ENCODE measurements at regions of chr12 and their contacts with region 1.

Region 1: DNA sequence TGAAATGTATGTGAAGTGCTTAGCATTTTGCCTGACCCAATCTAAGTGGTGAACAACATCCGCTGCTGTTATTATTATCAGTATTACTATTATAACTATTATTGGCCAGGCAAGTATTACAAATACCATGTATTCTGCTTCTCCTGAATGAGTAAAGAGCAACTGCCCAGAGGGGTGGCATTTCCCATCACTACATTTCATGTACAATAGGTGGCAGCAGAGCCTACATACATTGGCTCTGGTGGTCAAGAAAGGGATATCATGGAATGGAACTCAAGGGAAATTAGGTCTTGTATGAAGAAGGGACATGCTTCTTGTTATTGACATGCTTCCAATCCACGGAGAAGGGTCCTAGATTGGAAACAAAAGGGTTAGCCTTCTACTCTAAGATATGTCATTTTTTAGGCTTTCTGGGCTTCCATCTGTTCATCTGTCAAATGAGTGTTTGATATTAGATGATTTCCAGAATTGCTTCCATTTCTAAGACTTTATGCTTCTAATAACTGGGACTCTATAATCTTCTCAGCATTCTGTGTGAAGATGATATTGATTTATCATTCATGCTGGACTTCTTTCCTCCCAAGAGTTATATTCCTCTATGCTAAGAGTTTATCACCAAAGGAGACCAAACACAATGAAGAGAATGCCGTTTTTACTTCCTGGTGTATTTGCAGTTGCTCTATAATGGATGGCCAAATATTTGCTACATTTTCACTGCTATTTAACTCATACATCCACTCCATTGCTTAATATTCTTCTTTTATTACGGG is 239.1 kb downstream of the SSPN start:
- DNase-seq: peak; percentile 70
- H3K4me3 ChIP-seq: no peak overlapping the region
- H3K27ac ChIP-seq: no peak overlapping the region
- H3K4me1 ChIP-seq: no peaks in the 10 kb centered on the region
- CTCF ChIP-seq: peak; percentile 92

Region 2: GRCh38 chr12:26126340-26127284 is 307.9 kb before region 1 on chr12:
- CTCF ChIA-PET with region 1: no interaction called
- POLR2A ChIA-PET with region 1: no interaction called
- intact Hi-C with region 1: loop called (anchors 10 kb)
- DNase-seq: no peak
- H3K4me3 ChIP-seq: no peak overlapping the region
- H3K27ac ChIP-seq: no peak overlapping the region
- H3K4me1 ChIP-seq: no peaks in the 10 kb centered on the region
- CTCF ChIP-seq: no peak

Region 3: DNA sequence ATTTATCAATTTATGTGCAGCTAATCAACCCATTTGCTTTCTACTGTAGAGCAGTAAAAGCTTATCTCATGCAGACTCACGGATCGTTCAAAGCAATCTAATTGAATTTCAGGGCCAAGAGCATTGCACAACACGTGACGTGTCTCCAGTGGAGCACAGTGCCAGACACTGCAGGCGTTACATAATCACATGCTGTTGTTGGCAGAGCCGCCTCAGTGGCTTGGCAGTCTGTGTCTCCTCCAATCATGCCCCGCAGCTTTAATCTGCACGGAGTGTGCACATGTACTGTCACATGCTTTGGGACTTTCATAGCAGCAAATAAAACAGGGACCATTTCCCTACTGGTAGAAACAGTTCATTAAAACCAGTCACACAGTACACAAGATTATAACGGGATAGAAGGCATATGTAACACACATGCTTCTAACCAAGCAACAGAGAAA is 89.2 kb after region 1 on chr12:
- CTCF ChIA-PET with region 1: no interaction called
- POLR2A ChIA-PET with region 1: no interaction called
- intact Hi-C with region 1: loop called (anchors 2 kb)
- DNase-seq: no peak
- H3K4me3 ChIP-seq: no peak overlapping the region
- H3K27ac ChIP-seq: no peak overlapping the region
- H3K4me1 ChIP-seq: no peaks in the 10 kb centered on the region
- CTCF ChIP-seq: no peak

Region 4: GRCh38 chr12:26651566-26652188 is 217.2 kb after region 1 on chr12:
- CTCF ChIA-PET with region 1: no interaction called
- POLR2A ChIA-PET with region 1: no interaction called
- intact Hi-C with region 1: loop called (anchors 2 kb)
- DNase-seq: peak; percentile 64
- H3K4me3 ChIP-seq: no peak overlapping the region
- H3K27ac ChIP-seq: no peak overlapping the region
- H3K4me1 ChIP-seq: no peaks in the 10 kb centered on the region
- CTCF ChIP-seq: peak; percentile 96

Region 5: DNA sequence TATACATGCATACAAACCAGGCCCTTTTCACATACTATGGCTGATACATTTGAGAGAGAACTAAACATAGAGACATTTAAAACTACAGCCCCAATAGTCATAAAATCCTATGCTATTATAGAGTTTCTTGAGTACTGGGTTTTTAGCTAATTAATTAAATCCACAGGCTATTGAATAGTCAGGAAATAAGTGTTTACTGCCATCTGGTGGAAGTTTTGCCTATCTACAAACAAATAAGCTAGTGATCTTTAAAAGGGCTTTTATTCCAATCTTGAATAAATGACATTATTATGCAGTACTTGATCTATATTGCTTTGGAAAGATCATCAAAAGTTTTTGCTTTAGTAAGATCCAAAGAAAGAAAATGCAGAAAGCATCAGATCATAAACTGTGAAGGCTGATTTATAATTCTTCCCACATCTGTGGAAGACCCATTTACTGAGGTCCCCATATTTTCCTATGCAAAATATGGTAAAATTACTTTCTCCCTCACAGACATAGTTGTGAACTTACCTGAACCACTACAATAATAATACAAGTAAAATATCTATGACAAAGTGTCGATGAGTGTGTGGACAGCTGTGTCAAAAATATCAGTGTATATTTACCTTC is 267.2 kb after region 1 on chr12:
- CTCF ChIA-PET with region 1: no interaction called
- POLR2A ChIA-PET with region 1: no interaction called
- intact Hi-C with region 1: loop called (anchors 5 kb)
- DNase-seq: peak; percentile 54
- H3K4me3 ChIP-seq: no peak overlapping the region
- H3K27ac ChIP-seq: no peak overlapping the region
- H3K4me1 ChIP-seq: peaks cover 12% of the 10 kb centered on the region
- CTCF ChIP-seq: peak; percentile 87

Region 6: DNA sequence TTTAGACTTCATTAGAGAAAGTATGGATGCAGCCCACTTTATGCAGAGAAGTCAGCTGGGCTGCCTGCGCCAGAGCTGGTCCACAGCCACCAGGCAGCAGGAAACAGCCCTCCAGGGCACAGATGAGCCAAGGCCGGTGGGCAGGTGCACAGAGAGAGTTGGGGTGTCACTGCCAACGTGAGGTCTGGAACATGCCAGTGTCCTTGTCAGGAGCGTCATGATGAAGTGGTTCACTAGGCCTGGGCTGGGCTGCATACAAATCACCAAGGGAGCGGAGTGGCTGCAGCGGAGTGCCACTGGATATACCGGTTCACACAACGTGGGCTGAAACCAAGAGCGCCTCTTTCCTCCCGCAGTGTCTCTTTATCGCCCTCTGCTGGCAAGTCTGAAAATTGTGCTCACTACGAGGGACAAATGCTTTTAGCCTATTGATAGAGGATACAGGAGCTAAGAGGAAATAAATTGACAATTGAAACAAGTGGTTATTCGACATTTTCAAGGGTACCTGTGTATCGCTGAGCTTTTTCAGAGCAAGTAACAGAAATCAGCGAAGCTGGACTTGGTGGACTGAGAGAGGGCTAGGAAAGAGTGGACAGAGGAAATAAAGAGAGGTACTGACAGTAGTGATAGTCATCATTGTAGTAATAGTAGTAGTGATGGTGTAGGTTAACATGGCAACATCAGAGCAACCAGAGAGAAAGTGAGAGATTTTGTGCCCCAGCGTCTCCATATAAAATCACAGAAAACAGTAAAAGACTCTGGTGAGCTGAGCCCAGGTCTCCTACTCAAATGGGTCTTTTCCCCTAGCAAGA is 450.5 kb after region 1 on chr12:
- CTCF ChIA-PET with region 1: no interaction called
- POLR2A ChIA-PET with region 1: no interaction called
- intact Hi-C with region 1: no loop called
- DNase-seq: peak; percentile 81
- H3K4me3 ChIP-seq: no peak overlapping the region
- H3K27ac ChIP-seq: no peak overlapping the region
- H3K4me1 ChIP-seq: no peaks in the 10 kb centered on the region
- CTCF ChIP-seq: peak; percentile 98